SK-MEL-5 (cell line): ENCODE measurements at regions of chr1 and their contacts with region 1.

Region 1: DNA sequence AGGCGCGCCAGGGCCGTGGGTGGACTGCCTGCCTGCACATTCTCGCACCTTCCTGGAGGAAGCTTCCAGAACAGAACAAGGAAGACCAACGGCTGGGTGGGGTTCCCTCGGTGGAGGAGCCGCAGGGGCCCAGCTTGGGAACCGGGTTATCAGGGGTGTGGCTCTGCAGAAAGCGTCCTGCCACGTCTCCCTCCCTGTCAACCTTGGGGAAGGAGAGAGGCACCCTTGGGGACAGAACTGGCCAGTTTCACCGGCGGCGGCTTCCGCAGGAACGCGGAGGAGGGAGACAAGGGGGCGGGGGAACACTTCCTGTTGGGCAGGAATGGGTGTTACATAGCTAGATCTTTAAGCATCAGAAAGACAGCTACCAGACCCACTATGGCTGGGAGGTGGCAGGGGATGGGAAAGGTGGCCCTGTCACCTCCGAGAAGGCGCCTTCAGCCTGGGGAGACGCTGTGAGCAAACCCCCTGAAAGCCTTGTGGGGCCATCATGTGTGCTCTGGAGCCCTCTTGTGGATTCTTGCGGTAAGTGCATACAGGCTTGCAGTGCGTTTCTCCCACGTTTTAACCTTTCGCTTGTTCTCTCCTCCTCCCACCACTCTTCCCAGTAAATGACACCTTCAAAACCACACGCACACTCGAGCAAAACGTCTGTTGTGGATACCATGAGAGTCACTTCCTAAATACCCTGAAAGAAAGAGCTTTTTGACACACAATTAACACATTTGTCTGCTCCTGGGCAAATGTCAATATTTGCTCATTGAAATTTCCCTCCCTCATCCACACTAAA is 3.8 kb upstream of the PLEKHA6 start:
- DNase-seq: peak; percentile 78

Region 2: GRCh38 chr1:204213668-204214662 is 149.6 kb before region 1 on chr1 and contains the start of gene GOLT1A:
- in situ Hi-C with region 1: loop called (anchors 10 kb)
- DNase-seq: peak; percentile 84
- total RNA-seq, gene GOLT1A: not detected in 2 replicates

Region 3: GRCh38 chr1:204411451-204412204 is 48.1 kb after region 1 on chr1 and contains the start of gene PPP1R15B:
- in situ Hi-C with region 1: no loop called
- DNase-seq: peak; percentile 98
- total RNA-seq, gene PPP1R15B: 24.8 and 25.1 TPM in 2 replicates

Region 4: GRCh38 chr1:204446370-204447111 is 83.0 kb after region 1 on chr1:
- in situ Hi-C with region 1: no loop called
- DNase-seq: peak; percentile 71

Region 5: DNA sequence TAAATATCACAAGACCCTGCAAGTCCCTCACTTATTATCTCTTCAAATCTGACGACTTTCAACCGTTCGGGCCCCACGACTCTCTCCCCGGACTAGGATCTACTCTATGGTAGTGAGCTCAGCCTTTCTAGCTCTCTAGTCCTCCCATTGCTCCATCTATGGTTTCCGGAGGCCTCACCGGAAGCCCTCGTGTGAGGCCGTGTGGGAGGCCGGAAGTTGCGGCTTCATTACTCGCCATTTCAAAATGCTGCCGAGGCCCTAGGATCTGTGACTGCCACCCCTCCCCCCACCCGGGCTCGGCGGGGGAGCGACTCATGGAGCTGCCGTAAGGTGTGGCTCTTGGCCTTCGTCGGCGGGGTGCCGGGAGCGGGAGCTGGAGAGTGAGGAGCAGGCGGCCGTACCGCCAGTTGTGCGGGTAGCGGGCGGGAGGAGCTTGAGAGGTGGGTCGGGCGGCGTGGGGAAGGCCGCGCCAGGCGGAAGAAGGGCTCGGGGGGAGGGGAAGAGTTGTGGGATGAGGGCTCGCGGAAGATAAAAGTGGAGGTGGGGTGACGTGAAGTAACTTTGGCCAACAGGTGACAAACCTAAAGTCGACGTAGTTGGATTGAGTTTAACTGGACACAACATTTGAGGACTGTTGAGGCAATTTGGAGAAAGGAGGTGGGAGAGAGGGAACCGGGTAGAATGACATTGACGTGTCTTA is 152.8 kb after region 1 on chr1 and contains the start of gene MDM4:
- in situ Hi-C with region 1: no loop called
- DNase-seq: peak; percentile 98
- total RNA-seq, gene MDM4: 15.8 and 21.9 TPM in 2 replicates

Region 6: GRCh38 chr1:204837440-204838084 is 474.0 kb after region 1 on chr1:
- in situ Hi-C with region 1: no loop called
- DNase-seq: peak; percentile 45